Naive thymus-derived CD4-positive, alpha-beta T cell (primary cell): ENCODE measurements at regions of chr2 and their contacts with region 1.

Region 1: GRCh38 chr2:231674587-231675338 is 33.6 kb upstream of the PTMA start:
- DNase-seq: peak in 7 of 9 donors; percentile 30 to 70 (median 46)
- ATAC-seq: peak; percentile 74
- H3K4me3 ChIP-seq: no peak overlapping the region
- H3K4me3 Mint-ChIP-seq: no peak overlapping the region
- H3K27ac ChIP-seq: no peak overlapping the region
- H3K27ac Mint-ChIP-seq: peak overlapping the region in 1 of 9 donors; percentile 60
- H3K4me1 ChIP-seq: peaks cover 0 to 3% of the 10 kb centered on the region in 2 donors
- H3K4me1 Mint-ChIP-seq: peaks cover 5 to 43% (median 8%) of the 10 kb centered on the region in 7 donors
- H3K27me3 ChIP-seq: no peaks in the 10 kb centered on the region
- H3K27me3 Mint-ChIP-seq: peaks cover 0 to 4% (median 0%) of the 10 kb centered on the region in 5 donors

Region 2: GRCh38 chr2:231612179-231613053 is 62.3 kb before region 1 on chr2:
- CTCF ChIA-PET with region 1: interaction called, 116 read pairs
- POLR2A ChIA-PET with region 1: interaction called, 11 read pairs
- intact Hi-C with region 1: loop called (anchors 1 kb)
- DNase-seq: peak; percentile 70 to 95 (median 84)
- ATAC-seq: peak; percentile 88
- H3K4me3 ChIP-seq: peak overlapping the region; percentile 63
- H3K4me3 Mint-ChIP-seq: peak overlapping the region; percentile 65 to 96 (median 86)
- H3K27ac ChIP-seq: no peak overlapping the region
- H3K27ac Mint-ChIP-seq: peak overlapping the region in 7 of 9 donors; percentile 38 to 99 (median 69)
- H3K4me1 ChIP-seq: peaks cover 13 to 19% of the 10 kb centered on the region in 2 donors
- H3K4me1 Mint-ChIP-seq: peaks cover 7 to 51% (median 31%) of the 10 kb centered on the region in 7 donors
- H3K27me3 ChIP-seq: no peaks in the 10 kb centered on the region
- H3K27me3 Mint-ChIP-seq: no peaks in the 10 kb centered on the region

Region 3: DNA sequence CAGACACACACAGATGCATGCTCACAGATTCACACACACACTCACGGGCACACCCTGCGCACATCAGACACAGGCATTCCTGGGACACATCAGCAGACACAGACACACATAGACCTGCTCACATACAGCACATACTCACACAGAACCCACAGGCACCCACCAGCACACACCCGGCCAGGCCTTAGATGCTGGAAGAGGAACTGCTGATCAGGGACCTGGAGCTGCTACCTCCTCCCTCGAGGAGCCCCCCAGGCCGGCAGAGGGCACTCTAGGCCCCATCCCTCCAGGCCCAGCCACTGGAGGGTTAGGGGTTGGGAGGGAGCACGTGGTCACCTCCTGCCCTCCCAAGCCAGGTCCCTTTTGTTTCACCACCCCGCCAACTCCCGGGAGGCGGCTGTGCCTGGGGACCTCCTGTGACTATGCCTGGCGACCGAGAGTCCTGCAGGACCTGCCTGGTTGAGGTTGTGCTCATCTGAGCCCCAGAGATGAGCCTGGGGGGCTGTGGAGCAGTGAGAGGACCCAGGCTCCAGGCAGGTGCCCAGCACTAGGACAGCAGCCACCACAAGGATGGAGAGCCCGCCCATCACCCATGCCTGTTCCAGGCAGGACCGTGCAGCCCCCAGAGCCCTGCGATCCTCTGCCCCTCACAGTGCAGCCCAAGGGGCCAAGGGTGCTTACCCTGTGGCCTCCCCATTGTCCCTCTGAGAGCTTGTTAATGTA is 12.5 kb after region 1 on chr2:
- CTCF ChIA-PET with region 1: interaction called, 45 read pairs
- POLR2A ChIA-PET with region 1: interaction called, 4 read pairs
- intact Hi-C with region 1: loop called in 1 of 2 experiments (anchors 1 kb)
- DNase-seq: peak; percentile 50 to 70 (median 64)
- ATAC-seq: peak; percentile 91
- H3K4me3 ChIP-seq: no peak overlapping the region
- H3K4me3 Mint-ChIP-seq: no peak overlapping the region
- H3K27ac ChIP-seq: no peak overlapping the region
- H3K27ac Mint-ChIP-seq: peak overlapping the region in 1 of 9 donors; percentile 8
- H3K4me1 ChIP-seq: no peaks in the 10 kb centered on the region
- H3K4me1 Mint-ChIP-seq: peaks cover 0 to 11% (median 8%) of the 10 kb centered on the region in 7 donors
- H3K27me3 ChIP-seq: no peaks in the 10 kb centered on the region
- H3K27me3 Mint-ChIP-seq: peaks cover 5 to 14% (median 8%) of the 10 kb centered on the region in 5 donors

Region 4: GRCh38 chr2:231713730-231714430 is 39.1 kb after region 1 on chr2:
- CTCF ChIA-PET with region 1: interaction called, 475 read pairs
- POLR2A ChIA-PET with region 1: interaction called, 77 read pairs
- intact Hi-C with region 1: loop called (anchors 1 kb)
- DNase-seq: peak; percentile 83 to 96 (median 90)
- ATAC-seq: peak; percentile 67
- H3K4me3 ChIP-seq: no peak overlapping the region
- H3K4me3 Mint-ChIP-seq: peak overlapping the region; percentile 37 to 72 (median 58)
- H3K27ac ChIP-seq: peak overlapping the region; percentile 59
- H3K27ac Mint-ChIP-seq: peak overlapping the region; percentile 79 to 97 (median 94)
- H3K4me1 ChIP-seq: peaks cover 28 to 34% of the 10 kb centered on the region in 2 donors
- H3K4me1 Mint-ChIP-seq: peaks cover 30 to 45% (median 35%) of the 10 kb centered on the region in 7 donors
- H3K27me3 ChIP-seq: no peaks in the 10 kb centered on the region
- H3K27me3 Mint-ChIP-seq: peaks cover 0 to 2% (median 0%) of the 10 kb centered on the region in 5 donors

Region 5: GRCh38 chr2:231786177-231786916 is 111.6 kb after region 1 on chr2 and contains the start of gene COPS7B:
- CTCF ChIA-PET with region 1: no interaction called
- POLR2A ChIA-PET with region 1: no interaction called
- intact Hi-C with region 1: loop called in 1 of 2 experiments (anchors 1 kb)
- DNase-seq: peak; percentile 62 to 87 (median 76)
- ATAC-seq: peak; percentile 77
- H3K4me3 ChIP-seq: peak within 1 kb of the TSS; percentile 88
- H3K4me3 Mint-ChIP-seq: peak within 1 kb of the TSS; percentile 85 to 95 (median 92)
- H3K27ac ChIP-seq: peak within 1 kb of the TSS; percentile 82
- H3K27ac Mint-ChIP-seq: peak within 1 kb of the TSS; percentile 48 to 95 (median 83)
- H3K4me1 ChIP-seq: peaks cover 24 to 31% of the 10 kb centered on the region in 2 donors
- H3K4me1 Mint-ChIP-seq: peaks cover 50 to 93% (median 85%) of the 10 kb centered on the region in 7 donors
- H3K27me3 ChIP-seq: no peaks in the 10 kb centered on the region
- H3K27me3 Mint-ChIP-seq: no peaks in the 10 kb centered on the region
- total RNA-seq, gene COPS7B: 33.4 to 60.6 (median 50.6) TPM